Natural killer cell (primary cell): ENCODE measurements at regions of chr10 and their contacts with region 1.

Region 1: DNA sequence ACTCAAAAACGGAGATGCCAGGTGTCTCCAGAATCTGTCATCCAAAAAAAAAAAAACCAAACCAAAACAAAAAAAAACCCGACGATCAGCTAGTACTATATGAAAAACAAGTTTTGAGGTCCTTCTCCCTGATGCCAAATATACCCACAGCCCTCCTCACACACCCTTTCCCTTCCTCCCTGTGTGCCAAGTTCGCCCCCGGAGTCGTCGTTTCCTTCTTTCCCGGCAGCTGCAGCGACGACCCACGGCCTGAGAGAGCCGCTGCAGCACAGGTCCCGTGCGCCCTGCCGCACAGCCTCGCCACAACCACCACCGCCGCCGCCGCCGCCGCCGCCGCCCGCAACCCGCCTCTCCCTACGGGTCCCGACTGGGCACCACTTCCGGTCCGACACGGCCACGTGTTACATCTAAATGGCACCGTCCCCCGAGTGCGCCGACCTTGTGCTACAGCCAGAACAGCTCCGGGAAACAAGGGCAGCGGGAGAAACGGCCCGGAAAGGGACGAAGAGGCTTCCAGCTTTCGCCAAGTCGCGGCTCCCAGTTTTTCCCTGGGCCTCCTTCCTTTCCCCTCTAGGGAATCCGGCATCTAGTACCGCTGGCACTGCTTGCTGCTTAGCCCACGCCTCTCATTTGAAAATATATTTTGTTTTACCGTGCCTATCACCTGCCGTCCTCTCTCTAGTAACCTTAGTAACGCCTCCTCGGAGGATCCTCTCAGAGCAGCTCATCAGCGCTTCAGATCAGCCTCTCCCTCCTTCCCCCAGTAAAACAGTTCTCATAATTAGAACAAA is at the start of gene FRA10AC1:
- DNase-seq: peak; percentile 89 to 93
- ATAC-seq: peak; percentile 91 to 98 (median 94)
- H3K4me3 ChIP-seq: peak within 1 kb of the TSS; percentile 64
- H3K4me3 Mint-ChIP-seq: no peak within 1 kb of the TSS
- H3K27ac ChIP-seq: peak within 1 kb of the TSS; percentile 74
- H3K27ac Mint-ChIP-seq: no peak within 1 kb of the TSS
- H3K4me1 ChIP-seq: peaks cover 5% of the 10 kb centered on the region
- H3K4me1 Mint-ChIP-seq: peaks cover 7 to 11% of the 10 kb centered on the region in 2 donors
- H3K27me3 ChIP-seq: no peaks in the 10 kb centered on the region
- H3K27me3 Mint-ChIP-seq: peaks cover 7 to 9% of the 10 kb centered on the region in 2 donors
- CTCF ChIP-seq: no peak
- total RNA-seq, gene FRA10AC1: 8.3 to 18.7 (median 12.9) TPM

Region 2: DNA sequence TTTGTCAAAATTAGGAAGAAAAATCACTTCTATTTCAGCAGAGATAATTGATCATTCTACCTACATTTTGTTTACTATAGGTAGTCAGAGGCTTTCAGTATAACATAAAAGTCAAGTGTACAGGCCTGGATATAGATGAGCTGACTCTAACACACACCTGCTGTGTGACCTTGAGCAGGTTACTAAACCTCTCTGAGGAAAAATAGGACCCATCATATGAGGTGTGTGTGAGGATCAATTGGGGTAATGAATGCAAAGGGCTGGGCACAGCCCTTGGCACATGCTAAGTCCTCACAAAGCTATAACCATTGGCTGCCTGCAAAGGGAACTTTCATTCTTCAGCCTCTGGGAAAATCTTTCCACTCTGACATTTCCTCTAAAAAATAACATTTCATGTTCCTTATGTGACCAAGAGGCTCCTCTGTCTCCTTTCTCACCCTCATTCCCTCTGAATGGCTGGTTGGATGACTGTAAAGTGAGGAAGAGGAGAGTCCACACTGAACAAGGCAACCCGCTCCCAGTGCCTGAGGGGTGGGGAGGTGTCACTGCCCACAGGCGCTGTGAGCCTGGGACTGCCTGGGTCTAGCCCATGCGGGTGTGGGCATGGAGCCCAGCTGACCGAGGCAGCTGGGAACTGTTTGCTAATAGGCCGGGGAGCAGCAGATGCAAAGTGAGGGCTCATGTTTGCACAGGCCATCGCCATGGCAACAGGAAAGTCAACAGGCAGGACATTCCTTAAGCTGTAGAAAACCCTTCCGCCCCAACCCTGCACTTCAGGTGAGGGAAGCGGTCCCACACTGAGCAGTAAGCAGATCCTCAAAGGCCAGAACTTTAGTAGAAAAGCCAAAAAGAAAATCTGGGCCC is 257.1 kb before region 1 on chr10:
- intact Hi-C with region 1: no loop called
- DNase-seq: no peak
- ATAC-seq: no peak
- H3K4me3 ChIP-seq: no peak overlapping the region
- H3K4me3 Mint-ChIP-seq: no peak overlapping the region
- H3K27ac ChIP-seq: no peak overlapping the region
- H3K27ac Mint-ChIP-seq: no peak overlapping the region
- H3K4me1 ChIP-seq: no peaks in the 10 kb centered on the region
- H3K4me1 Mint-ChIP-seq: no peaks in the 10 kb centered on the region
- H3K27me3 ChIP-seq: no peaks in the 10 kb centered on the region
- H3K27me3 Mint-ChIP-seq: peaks cover 0 to 6% of the 10 kb centered on the region in 2 donors
- CTCF ChIP-seq: no peak

Region 3: GRCh38 chr10:93496322-93497041 is 205.9 kb before region 1 on chr10 and contains the start of gene CEP55:
- intact Hi-C with region 1: loop called (anchors 5 kb)
- DNase-seq: peak; percentile 94 to 96
- ATAC-seq: peak; percentile 99 to 100 (median 99)
- H3K4me3 ChIP-seq: peak within 1 kb of the TSS; percentile 95
- H3K4me3 Mint-ChIP-seq: peak within 1 kb of the TSS; percentile 91
- H3K27ac ChIP-seq: peak within 1 kb of the TSS; percentile 17
- H3K27ac Mint-ChIP-seq: peak within 1 kb of the TSS; percentile 73 to 79
- H3K4me1 ChIP-seq: peaks cover 14% of the 10 kb centered on the region
- H3K4me1 Mint-ChIP-seq: peaks cover 11 to 18% of the 10 kb centered on the region in 2 donors
- H3K27me3 ChIP-seq: no peaks in the 10 kb centered on the region
- H3K27me3 Mint-ChIP-seq: peaks cover 11 to 16% of the 10 kb centered on the region in 2 donors
- CTCF ChIP-seq: no peak
- total RNA-seq, gene CEP55: 0.35 to 0.85 (median 0.50) TPM

Region 4: DNA sequence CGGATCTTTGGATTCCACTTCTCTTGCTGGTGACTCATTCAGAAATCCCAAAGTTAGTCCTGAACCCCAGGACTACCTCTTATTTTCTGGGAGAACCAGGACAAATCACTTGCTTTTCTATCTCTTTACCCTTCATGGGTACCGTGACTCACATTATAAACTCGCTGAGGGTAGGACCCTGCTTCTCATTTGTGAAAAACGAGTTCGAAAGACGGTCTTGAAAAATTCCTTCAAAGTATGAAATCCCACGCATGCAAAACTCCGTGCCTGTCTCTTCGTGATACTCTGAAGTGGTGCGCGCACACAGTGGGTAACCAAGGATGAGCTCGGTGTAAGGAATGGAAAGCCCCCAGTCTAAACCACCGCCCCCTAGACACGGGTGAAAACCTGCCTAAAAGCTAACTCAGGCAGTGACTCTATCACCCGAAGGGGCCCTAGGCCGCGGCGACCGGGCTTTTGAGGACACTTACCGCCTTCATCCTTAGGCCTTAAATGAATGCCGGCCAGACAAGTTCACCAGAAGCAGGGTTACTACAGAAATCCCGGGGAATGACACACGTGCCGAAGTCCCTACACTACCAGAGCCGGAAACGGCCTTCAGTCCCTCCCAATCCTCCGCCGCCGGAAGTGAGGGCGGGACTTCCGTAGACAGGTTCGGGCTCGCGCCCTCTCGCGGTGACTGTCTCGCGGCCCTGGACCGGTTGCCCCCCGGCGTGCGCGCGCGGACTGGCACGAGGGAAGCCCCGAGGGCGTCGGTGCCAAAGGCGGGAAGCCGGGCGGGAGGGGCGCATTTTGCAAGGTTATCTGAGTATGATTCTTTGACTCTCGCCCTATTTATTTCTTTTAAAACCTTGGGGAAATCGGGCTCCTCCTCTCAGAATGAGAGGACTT is 660.2 kb after region 1 on chr10 and contains the start of gene NOC3L:
- intact Hi-C with region 1: loop called (anchors 2 kb)
- DNase-seq: peak; percentile 91 to 97
- ATAC-seq: peak; percentile 93 to 98 (median 94)
- H3K4me3 ChIP-seq: peak within 1 kb of the TSS; percentile 73
- H3K4me3 Mint-ChIP-seq: peak within 1 kb of the TSS; percentile 98
- H3K27ac ChIP-seq: peak within 1 kb of the TSS; percentile 88
- H3K27ac Mint-ChIP-seq: peak within 1 kb of the TSS; percentile 95 to 97
- H3K4me1 ChIP-seq: peaks cover 5% of the 10 kb centered on the region
- H3K4me1 Mint-ChIP-seq: peaks cover 18 to 38% of the 10 kb centered on the region in 2 donors
- H3K27me3 ChIP-seq: no peaks in the 10 kb centered on the region
- H3K27me3 Mint-ChIP-seq: peaks cover 0 to 13% of the 10 kb centered on the region in 2 donors
- CTCF ChIP-seq: peak; percentile 80
- total RNA-seq, gene NOC3L: 10.8 to 18.6 (median 13.1) TPM